AG04450 (cell line): ENCODE measurements at regions of chr4 and their contacts with region 1.

Region 1: GRCh38 chr4:140609548-140610425 is 41.0 kb upstream of the UCP1 start:
- DNase-seq: peak; percentile 4
- H3K4me3 ChIP-seq: no peak overlapping the region
- H3K27ac ChIP-seq: no peak overlapping the region
- H3K27me3 ChIP-seq: peaks cover 5% of the 10 kb centered on the region
- CTCF ChIP-seq: peak; percentile 59

Region 2: DNA sequence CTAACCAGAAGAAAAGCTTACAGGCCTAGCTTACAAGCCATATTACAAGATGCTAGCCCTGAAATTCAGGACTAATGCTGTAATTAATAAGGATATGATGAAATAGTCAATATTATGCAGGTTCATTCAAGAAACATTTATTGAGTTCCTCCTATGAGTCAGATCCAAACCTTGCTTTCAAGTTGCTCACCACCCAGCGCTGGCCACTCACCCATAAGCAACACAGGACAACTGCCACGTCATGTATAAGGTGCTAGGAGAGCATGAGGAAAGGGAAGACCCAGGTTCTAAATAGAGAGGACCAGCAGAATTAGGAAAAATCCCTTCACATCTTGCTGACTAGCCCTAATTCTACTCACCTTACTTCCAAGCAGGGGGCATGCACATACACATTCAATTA is 479.1 kb before region 1 on chr4:
- CTCF ChIA-PET with region 1: no interaction called
- POLR2A ChIA-PET with region 1: no interaction called
- DNase-seq: no peak
- H3K4me3 ChIP-seq: no peak overlapping the region
- H3K27ac ChIP-seq: no peak overlapping the region
- H3K27me3 ChIP-seq: no peaks in the 10 kb centered on the region
- CTCF ChIP-seq: no peak

Region 3: DNA sequence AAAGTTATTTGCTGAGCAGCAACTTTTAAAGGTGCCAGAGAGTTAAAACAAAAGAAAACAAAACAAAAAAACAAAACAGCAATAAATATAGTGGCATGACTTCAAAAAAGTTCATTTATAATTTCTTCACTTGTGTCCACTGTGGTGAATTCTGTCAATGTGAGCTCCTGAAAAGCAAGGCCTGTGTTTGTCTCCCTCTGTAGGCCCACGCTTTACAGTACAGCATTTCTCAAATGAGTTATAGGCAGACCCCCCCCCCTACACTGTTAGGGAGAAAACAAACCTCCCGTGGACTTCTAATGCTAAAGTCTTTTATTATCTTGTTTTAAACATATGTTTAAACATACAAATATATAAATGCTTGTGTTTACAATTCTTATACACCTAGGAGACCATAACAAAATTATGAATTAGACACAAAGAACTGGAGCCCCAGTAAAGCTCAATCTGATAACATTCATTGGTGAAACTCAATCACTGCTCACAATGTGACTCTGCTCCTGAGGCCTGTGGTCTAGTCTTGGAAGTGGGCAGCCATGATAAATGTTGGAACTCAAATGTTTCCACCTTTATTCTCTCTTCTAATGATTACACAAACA is 283.3 kb before region 1 on chr4:
- CTCF ChIA-PET with region 1: interaction called, 16 read pairs
- POLR2A ChIA-PET with region 1: no interaction called
- DNase-seq: no peak
- H3K4me3 ChIP-seq: no peak overlapping the region
- H3K27ac ChIP-seq: no peak overlapping the region
- H3K27me3 ChIP-seq: no peaks in the 10 kb centered on the region
- CTCF ChIP-seq: peak; percentile 84

Region 4: GRCh38 chr4:140427106-140427961 is 182.5 kb before region 1 on chr4 and contains the start of gene CLGN:
- CTCF ChIA-PET with region 1: interaction called, 12 read pairs
- POLR2A ChIA-PET with region 1: no interaction called
- DNase-seq: no peak
- H3K4me3 ChIP-seq: peak within 1 kb of the TSS; percentile 80
- H3K27ac ChIP-seq: no peak within 1 kb of the TSS
- H3K27me3 ChIP-seq: no peaks in the 10 kb centered on the region
- CTCF ChIP-seq: peak; percentile 39
- polyA plus RNA-seq, gene CLGN: 1.6 and 2.7 TPM in 2 replicates

Region 5: GRCh38 chr4:140469791-140470733 is 139.7 kb before region 1 on chr4:
- CTCF ChIA-PET with region 1: no interaction called
- POLR2A ChIA-PET with region 1: no interaction called
- DNase-seq: no peak
- H3K4me3 ChIP-seq: no peak overlapping the region
- H3K27ac ChIP-seq: no peak overlapping the region
- H3K27me3 ChIP-seq: peaks cover 16% of the 10 kb centered on the region
- CTCF ChIP-seq: no peak

Region 6: GRCh38 chr4:140635606-140636005 is 25.8 kb after region 1 on chr4:
- CTCF ChIA-PET with region 1: no interaction called
- POLR2A ChIA-PET with region 1: no interaction called
- DNase-seq: no peak
- H3K4me3 ChIP-seq: no peak overlapping the region
- H3K27ac ChIP-seq: no peak overlapping the region
- H3K27me3 ChIP-seq: no peaks in the 10 kb centered on the region
- CTCF ChIP-seq: no peak

Region 7: DNA sequence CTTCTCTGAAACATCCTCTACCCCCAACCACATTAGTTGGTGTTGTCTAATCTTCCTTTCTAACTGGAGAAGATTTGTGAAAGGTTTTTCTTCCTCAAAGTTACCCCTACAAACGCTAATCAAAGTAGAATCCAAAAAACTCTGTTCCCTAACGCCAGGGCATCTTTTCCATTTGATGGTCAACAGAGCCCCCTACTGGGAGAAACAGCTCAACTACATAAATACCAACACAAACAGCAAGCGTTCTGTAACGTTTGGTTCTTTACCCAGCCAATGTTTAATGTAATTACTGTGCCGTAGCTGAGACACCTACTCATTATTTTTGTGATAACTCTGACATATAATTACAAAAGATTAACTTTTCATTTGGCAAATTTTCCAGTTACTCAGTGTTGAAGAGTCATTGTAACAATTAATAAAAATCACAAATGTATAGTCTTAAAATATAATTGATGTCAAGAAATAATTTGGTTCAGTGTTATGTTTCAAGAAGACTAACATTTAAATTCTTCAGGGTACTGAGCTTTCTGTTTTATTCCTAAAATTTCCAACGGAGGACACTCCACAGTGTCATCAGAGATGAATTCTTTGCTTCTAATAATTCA is 241.3 kb after region 1 on chr4:
- CTCF ChIA-PET with region 1: interaction called, 37 read pairs
- POLR2A ChIA-PET with region 1: no interaction called
- DNase-seq: peak; percentile 43
- H3K4me3 ChIP-seq: no peak overlapping the region
- H3K27ac ChIP-seq: no peak overlapping the region
- H3K27me3 ChIP-seq: no peaks in the 10 kb centered on the region
- CTCF ChIP-seq: peak; percentile 81